Dendritic cell treated with granulocyte-macrophage colony-stimulating factor and Interleukin-4, amounts not matched to agents 40 ng/mL and 50 ng/mL, for 4 days (primary cell): ENCODE measurements at regions of chr14 and their contacts with region 1.

Region 1: DNA sequence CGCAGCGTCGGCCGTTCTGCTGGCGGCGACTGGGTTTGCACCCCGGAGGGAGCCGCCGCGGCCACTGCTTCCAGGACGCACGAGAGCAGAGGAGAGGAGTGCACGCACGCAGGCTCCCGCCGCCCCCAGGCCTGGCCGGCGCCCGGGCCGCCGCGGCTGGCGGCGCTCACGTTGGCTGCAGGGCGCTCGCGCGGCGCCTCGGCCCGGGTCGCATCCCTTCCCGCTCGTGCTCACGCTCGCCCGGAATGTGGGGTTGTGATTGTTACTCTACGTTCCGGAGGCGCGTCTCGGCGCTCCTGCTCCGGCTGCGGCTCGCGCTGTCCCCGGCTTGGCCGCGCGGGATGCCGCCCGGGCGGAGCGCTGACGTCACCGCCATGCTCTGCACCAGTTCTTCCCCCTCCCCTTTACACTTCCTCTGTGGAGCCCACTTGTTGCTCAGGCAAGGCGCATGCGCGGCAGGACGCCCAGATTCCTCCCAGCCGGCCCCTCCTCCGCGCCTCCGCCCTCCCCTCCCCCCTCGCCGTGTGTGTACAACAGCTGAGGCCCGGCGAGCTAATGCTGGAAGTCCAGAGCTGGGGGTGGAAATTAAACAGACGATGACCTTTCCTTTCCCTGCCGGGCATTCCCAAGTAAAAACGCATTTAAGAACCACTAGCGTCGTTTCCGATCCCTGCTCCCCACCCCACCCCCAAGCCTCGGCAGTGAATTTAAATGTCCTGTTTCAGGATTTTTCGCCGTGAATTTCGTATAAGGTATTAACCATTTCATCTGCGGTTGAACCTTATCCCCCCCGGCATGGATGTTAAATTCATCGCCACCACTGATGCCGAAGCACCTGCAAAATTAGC is at the start of gene IRF2BPL:
- H3K4me3 Mint-ChIP-seq: peak within 1 kb of the TSS; percentile 80
- H3K27ac Mint-ChIP-seq: peak within 1 kb of the TSS; percentile 94
- H3K4me1 Mint-ChIP-seq: peaks cover 56% of the 10 kb centered on the region
- H3K27me3 Mint-ChIP-seq: no peaks in the 10 kb centered on the region

Region 2: DNA sequence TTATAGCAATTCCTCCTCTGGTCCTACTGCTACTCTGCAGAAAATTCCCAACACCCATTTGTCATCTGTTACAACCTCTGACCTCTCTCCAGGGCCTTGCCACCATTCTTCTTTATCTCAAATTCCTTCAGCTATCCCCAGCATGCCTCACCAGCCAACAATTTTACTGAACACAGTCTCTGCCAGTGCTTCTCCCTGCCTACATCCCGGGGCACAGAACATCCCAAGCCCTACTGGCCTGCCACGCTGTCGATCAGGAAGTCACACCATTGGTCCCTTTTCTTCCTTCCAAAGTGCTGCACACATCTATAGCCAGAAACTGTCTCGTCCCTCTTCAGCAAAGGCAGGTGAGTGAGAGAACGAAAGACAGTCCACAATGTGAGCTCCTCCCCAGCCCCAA is 1245.4 kb before region 1 on chr14:
- intact Hi-C with region 1: no loop called
- H3K4me3 Mint-ChIP-seq: no peak overlapping the region
- H3K27ac Mint-ChIP-seq: no peak overlapping the region
- H3K4me1 Mint-ChIP-seq: no peaks in the 10 kb centered on the region
- H3K27me3 Mint-ChIP-seq: no peaks in the 10 kb centered on the region

Region 3: DNA sequence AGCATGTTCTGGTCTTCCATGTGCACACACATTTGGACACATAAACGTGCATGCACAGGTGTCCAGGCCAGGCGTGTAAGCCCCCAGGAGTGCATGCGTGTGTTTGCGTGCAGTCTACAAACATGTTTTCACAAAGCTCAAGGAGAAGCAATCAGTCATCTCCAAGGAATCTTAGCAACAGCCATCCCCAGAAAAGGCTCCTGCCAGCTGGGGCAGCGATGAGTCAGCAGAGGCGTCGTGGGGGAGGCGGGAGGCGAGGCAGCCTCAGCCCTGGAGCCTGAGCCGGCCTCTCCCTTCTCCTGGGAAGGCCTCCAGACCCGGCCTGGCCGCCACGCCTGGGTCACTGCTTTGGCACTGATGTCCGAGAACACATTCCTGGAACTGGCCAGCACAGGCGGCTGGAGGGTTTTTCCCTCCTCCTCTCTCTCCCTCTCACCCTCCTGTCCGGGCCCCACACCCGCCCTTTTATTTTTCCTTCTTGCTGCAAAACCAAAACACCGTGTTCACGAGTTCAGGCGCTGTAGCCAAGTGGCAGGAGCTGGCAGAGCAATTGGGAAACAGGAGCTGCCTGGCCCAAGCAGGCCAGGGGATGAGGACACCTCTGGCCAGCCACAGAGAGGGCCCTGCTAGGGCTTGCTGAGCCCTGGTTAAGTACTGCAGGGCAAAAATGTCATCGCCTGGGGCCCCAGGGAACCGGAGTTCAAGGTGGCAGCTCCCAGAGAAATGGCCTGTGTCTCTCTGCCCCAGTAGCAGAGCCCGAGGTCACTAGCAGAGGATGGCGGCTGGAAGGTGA is 109.7 kb before region 1 on chr14:
- intact Hi-C with region 1: loop called (anchors 10 kb)
- H3K4me3 Mint-ChIP-seq: peak overlapping the region; percentile 30
- H3K27ac Mint-ChIP-seq: peak overlapping the region; percentile 96
- H3K4me1 Mint-ChIP-seq: peaks cover 76% of the 10 kb centered on the region
- H3K27me3 Mint-ChIP-seq: peaks cover 23% of the 10 kb centered on the region

Region 4: GRCh38 chr14:76956316-76957090 is 72.1 kb before region 1 on chr14:
- intact Hi-C with region 1: loop called (anchors 5 kb)
- H3K4me3 Mint-ChIP-seq: peak overlapping the region; percentile 66
- H3K27ac Mint-ChIP-seq: peak overlapping the region; percentile 97
- H3K4me1 Mint-ChIP-seq: peaks cover 81% of the 10 kb centered on the region
- H3K27me3 Mint-ChIP-seq: no peaks in the 10 kb centered on the region

Region 5: DNA sequence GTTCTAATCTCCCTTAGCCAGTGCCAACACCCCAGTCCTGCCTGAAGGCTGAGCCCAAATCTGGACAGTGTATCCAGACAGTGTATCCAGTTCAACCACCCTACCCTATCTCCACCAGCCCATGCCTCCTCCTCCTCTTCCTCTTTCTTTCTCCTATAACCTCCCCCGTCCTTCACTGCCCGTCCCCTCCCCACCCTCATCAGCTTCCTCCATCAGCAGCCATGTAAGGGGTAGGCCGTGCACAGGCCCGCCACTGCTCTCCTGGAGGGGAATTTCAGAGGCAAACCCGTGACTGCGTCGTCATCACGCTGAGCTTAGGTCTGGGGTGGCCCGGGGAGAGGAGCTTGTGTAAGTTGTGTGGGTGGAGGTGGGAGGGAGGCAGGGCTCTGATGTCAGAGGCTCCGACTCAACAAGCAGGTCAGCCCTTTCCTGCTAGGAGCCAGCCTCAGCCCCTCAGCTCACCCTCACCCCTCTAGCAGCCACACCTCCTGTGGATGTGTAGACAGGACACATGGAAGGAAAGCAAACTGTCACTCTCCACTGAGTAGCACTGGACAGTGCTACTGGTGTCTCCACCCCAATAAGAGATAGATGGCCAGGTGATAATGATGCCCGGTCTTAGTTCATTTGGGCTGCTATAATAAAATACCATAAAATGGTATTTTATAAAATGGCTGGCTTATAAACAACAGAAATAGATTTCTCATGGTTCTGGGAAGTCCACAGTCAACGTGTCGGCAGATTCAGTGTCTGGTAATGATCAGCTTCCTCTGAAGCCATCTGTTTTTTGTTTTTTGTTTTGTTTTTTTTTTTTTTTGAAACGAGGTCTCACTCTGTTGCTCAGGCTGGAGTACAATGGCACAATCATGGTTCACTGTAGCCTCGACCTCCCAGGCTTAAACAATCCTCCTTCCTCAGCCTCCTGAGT is 50.6 kb before region 1 on chr14:
- intact Hi-C with region 1: loop called (anchors 2 kb)
- H3K4me3 Mint-ChIP-seq: no peak overlapping the region
- H3K27ac Mint-ChIP-seq: peak overlapping the region; percentile 90
- H3K4me1 Mint-ChIP-seq: peaks cover 37% of the 10 kb centered on the region
- H3K27me3 Mint-ChIP-seq: peaks cover 1% of the 10 kb centered on the region

Region 6: DNA sequence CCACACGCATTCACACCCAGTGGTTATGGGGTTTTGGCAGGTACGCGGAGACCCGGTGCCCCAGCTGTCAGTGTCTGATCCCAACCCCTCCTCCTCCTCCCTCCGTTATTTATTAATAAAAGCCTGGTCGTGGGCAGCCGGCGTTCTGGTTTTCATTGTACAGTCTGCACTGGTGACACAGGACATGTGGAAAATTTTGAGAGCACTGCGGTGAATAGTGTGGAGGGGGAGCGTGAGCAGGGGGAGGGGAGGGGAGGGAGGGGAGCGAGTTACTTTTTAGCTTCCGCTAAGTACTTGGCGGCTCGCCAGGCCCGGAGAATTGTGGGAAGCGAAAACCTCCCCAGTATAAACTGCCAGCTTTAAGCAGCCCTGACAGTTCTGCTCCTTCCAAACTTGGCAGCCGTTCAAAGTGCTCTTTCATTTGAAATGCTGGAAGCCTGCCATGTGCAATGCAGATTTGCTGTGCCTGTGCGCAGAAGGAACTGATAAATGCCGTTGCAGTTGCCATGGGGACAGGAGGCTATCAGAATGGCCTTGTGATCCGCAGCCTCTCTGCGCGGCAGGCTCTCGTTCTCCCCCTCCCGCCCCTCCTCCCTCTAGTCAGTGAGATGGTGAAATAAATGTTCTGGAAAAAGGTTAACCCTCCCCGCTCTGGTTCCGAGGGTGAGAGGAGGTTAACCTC is 11.6 kb after region 1 on chr14:
- intact Hi-C with region 1: loop called (anchors 1 kb)
- H3K4me3 Mint-ChIP-seq: peak overlapping the region; percentile 42
- H3K27ac Mint-ChIP-seq: peak overlapping the region; percentile 92
- H3K4me1 Mint-ChIP-seq: peaks cover 89% of the 10 kb centered on the region
- H3K27me3 Mint-ChIP-seq: no peaks in the 10 kb centered on the region

Region 7: GRCh38 chr14:77067632-77068514 is 39.3 kb after region 1 on chr14:
- intact Hi-C with region 1: no loop called
- H3K4me3 Mint-ChIP-seq: no peak overlapping the region
- H3K27ac Mint-ChIP-seq: no peak overlapping the region
- H3K4me1 Mint-ChIP-seq: peaks cover 32% of the 10 kb centered on the region
- H3K27me3 Mint-ChIP-seq: peaks cover 22% of the 10 kb centered on the region